GM23248 (cell line): ENCODE measurements at regions of chr5 and their contacts with region 1.

Region 1: GRCh38 chr5:82351754-82352145 is 73.6 kb upstream of the RPS23 start:
- DNase-seq: peak; percentile 83
- H3K4me3 ChIP-seq: no peak overlapping the region
- H3K27ac ChIP-seq: peak overlapping the region; percentile 66
- H3K4me1 ChIP-seq: peaks cover 57% of the 10 kb centered on the region
- H3K27me3 ChIP-seq: no peaks in the 10 kb centered on the region

Region 2: DNA sequence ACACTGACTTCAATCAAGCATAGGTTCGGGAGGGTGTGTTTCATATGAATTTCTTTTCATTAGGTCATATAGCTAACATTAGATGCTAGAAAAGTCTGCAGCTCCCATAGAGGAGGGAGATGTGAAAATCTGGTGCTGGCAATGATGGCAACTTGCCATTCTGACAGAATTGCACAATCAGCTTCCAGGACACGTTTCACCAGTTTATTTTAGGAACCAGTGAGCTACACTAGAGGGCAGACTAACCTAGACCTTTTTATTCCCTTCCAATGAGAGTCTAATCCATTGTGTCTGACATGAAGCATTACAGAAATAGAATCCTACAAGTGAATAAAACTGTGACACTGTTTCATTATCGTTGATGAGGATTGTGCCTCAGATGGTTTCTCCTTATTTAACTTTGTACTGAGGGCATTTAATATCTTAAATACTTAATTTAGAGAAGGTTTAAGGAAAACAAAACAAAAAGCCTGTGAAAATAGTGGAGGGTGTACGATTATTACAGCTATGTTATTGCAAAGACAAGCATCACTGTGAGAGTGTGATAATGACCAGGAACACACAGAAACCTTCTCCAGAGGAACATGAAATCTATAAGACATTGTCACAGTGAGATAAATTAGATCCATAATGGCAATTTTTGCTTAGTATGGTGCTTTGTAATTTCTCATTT is 289.7 kb after region 1 on chr5:
- in situ Hi-C with region 1: loop called (anchors 25 kb)
- DNase-seq: peak; percentile 84
- H3K4me3 ChIP-seq: no peak overlapping the region
- H3K27ac ChIP-seq: no peak overlapping the region
- H3K4me1 ChIP-seq: no peaks in the 10 kb centered on the region
- H3K27me3 ChIP-seq: peaks cover 3% of the 10 kb centered on the region; the same call in 1 of the 2 replicates

Region 3: DNA sequence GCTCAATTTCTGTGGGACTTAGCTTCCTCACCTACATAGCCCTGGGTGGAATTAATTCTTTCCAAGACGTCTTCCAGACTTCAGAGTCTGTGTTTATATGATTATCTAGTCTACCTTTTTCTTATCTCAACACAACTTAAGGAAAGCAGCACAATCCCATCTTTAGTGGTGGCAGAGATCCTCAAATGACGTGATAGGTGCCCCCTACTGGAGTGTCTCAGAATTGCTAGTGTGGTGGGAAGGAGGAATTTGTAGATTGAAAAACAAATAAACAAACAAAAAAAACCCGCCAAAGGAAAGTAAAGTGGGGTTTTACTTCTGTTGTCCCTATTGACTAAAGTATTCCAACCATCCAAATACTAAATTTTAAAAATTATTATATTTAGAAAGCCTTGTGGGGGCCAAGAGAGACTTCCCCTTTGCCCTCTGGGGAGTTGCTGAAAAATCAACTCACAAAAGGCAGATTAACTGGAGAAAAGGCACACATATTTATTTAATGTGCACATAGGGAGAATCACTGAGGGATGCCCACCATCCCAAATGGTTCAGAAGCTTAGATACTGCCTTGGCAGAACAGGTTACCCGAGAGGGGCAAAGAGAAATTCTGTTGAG is 442.2 kb after region 1 on chr5:
- in situ Hi-C with region 1: loop called (anchors 25 kb)
- DNase-seq: peak; percentile 38
- H3K4me3 ChIP-seq: no peak overlapping the region
- H3K27ac ChIP-seq: no peak overlapping the region
- H3K4me1 ChIP-seq: no peaks in the 10 kb centered on the region
- H3K27me3 ChIP-seq: no peaks in the 10 kb centered on the region

Region 4: GRCh38 chr5:83069096-83069799 is 717.5 kb after region 1 on chr5:
- in situ Hi-C with region 1: loop called (anchors 25 kb)
- DNase-seq: no peak
- H3K4me3 ChIP-seq: no peak overlapping the region
- H3K27ac ChIP-seq: no peak overlapping the region
- H3K4me1 ChIP-seq: peaks cover 34% of the 10 kb centered on the region; the same call in 1 of the 2 replicates
- H3K27me3 ChIP-seq: no peaks in the 10 kb centered on the region